Activated naive CD4-positive, alpha-beta T cell treated with anti-CD3 and anti-CD28 coated beads for 36 hours (primary cell): ENCODE measurements at regions of chr12 and their contacts with region 1.

Region 1: DNA sequence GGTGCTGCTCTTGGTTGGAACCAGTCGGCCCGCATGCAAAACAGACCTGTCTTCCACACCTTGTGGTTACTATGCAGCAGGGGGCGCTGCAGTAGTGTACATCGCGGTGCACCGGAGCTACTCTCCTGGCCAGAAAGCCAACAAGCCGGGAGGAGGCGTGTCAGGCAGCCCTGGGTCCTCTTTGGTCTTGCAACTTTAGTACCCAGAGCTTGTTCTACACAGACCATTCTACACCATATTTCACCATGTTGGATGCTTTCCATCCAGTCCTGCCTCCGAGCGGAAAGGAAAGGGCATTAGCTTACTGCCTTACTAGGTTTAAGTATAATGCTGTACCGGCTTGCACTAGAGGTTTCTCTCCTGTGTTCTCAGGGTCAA is 927 bp upstream of the TMTC2 start:
- DNase-seq: peak; percentile 97
- H3K4me3 Mint-ChIP-seq: peak overlapping the region; percentile 84
- H3K27ac Mint-ChIP-seq: peak overlapping the region; percentile 68
- H3K4me1 Mint-ChIP-seq: peaks cover 11% of the 10 kb centered on the region
- H3K27me3 Mint-ChIP-seq: peaks cover 6% of the 10 kb centered on the region

Region 2: GRCh38 chr12:81296556-81297305 is 1389.0 kb before region 1 on chr12:
- CTCF ChIA-PET with region 1: no interaction called
- intact Hi-C with region 1: no loop called
- DNase-seq: no peak
- H3K4me3 Mint-ChIP-seq: no peak overlapping the region
- H3K27ac Mint-ChIP-seq: no peak overlapping the region
- H3K4me1 Mint-ChIP-seq: no peaks in the 10 kb centered on the region
- H3K27me3 Mint-ChIP-seq: no peaks in the 10 kb centered on the region

Region 3: GRCh38 chr12:81859521-81859920 is 826.3 kb before region 1 on chr12:
- CTCF ChIA-PET with region 1: no interaction called
- intact Hi-C with region 1: no loop called
- DNase-seq: no peak
- H3K4me3 Mint-ChIP-seq: no peak overlapping the region
- H3K27ac Mint-ChIP-seq: no peak overlapping the region
- H3K4me1 Mint-ChIP-seq: peaks cover 2% of the 10 kb centered on the region
- H3K27me3 Mint-ChIP-seq: peaks cover 2% of the 10 kb centered on the region

Region 4: DNA sequence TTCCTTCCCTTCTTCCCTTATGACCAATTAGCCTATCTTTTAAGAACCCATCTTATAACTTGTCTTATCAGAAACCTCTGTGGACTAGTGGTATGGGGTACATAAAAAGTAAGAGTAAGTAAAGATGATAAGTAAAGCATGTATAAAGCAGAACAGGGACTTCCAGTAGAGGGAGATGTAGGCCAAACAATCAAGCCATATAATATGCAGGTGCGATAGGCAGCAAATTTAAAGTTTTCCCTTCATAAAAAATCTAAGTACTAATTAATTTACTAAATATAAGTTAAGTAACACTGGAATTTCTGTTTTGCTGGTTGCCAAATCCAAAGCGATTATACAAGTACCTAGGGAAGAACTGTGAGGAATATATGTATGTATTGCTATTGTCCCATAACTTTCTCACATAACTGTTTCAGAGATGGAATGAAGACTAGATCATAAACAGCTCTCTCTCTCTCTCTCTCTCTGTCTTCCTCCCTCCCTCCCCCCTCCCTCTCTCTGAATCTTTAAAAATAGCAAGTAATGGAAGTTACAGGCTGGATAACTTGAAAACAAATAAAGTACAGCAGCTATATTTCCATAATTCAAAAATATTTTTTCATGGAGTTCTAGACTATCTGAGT is 301.7 kb before region 1 on chr12:
- CTCF ChIA-PET with region 1: interaction called, 3 read pairs
- intact Hi-C with region 1: loop called (anchors 5 kb)
- DNase-seq: no peak
- H3K4me3 Mint-ChIP-seq: no peak overlapping the region
- H3K27ac Mint-ChIP-seq: no peak overlapping the region
- H3K4me1 Mint-ChIP-seq: no peaks in the 10 kb centered on the region
- H3K27me3 Mint-ChIP-seq: no peaks in the 10 kb centered on the region

Region 5: GRCh38 chr12:82672811-82673495 is 12.8 kb before region 1 on chr12:
- CTCF ChIA-PET with region 1: interaction called, 21 read pairs
- intact Hi-C with region 1: no loop called
- DNase-seq: no peak
- H3K4me3 Mint-ChIP-seq: no peak overlapping the region
- H3K27ac Mint-ChIP-seq: no peak overlapping the region
- H3K4me1 Mint-ChIP-seq: no peaks in the 10 kb centered on the region
- H3K27me3 Mint-ChIP-seq: peaks cover 13% of the 10 kb centered on the region

Region 6: DNA sequence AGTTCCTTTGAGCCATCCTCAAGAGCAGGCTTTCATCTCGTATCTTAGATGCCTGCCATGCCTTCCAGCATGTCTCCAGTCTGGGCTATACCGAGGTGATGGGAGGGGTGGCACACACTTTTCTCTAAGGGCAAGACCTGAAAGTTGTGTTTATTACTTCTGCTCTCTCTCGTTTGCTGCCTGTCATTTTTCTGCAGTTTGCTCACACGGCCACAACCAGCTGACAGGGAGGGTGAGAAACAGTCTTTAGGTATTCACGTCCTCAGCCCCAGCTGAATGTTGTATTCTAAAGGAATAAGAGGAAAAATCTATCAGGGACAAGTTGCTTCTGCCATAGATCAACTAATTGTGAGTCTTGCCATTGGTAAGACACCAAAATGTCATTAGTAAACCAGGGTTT is 88.9 kb after region 1 on chr12:
- CTCF ChIA-PET with region 1: no interaction called
- intact Hi-C with region 1: loop called (anchors 5 kb)
- DNase-seq: no peak
- H3K4me3 Mint-ChIP-seq: no peak overlapping the region
- H3K27ac Mint-ChIP-seq: no peak overlapping the region
- H3K4me1 Mint-ChIP-seq: no peaks in the 10 kb centered on the region
- H3K27me3 Mint-ChIP-seq: no peaks in the 10 kb centered on the region

Region 7: DNA sequence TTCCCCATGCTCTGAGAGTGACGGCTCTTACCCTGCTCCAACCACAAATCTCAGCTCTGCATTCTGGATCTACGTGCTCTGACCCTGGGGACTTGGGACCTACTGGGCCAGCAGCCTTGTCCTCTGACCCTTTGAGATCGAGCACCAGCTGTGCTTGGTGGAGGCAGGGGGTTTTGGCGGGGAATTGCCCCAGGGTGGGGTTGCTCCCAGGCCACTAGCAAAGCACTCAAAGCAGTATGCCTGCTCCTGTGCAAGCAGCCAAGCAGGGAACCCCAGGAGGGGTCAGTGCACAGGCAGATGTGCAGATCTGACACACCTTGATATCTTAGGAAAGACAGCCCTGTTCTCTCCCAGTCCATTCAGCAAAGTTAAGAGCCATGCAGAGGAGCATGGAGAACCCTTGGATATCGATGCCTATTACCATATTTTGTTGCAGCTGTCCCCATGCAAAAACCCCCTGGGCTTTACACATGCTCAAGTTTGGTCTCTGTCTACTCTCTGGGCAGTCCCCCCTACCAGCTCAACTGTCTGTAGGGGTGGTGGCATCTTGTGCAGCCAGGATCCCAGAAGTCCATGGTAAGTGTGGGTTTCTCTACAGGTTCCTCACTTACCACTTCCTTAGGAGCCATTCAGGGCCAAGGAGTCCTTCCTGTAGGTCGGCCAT is 319.9 kb after region 1 on chr12:
- CTCF ChIA-PET with region 1: interaction called, 3 read pairs
- intact Hi-C with region 1: loop called (anchors 2 kb)
- DNase-seq: no peak
- H3K4me3 Mint-ChIP-seq: no peak overlapping the region
- H3K27ac Mint-ChIP-seq: no peak overlapping the region
- H3K4me1 Mint-ChIP-seq: no peaks in the 10 kb centered on the region
- H3K27me3 Mint-ChIP-seq: no peaks in the 10 kb centered on the region

Region 8: DNA sequence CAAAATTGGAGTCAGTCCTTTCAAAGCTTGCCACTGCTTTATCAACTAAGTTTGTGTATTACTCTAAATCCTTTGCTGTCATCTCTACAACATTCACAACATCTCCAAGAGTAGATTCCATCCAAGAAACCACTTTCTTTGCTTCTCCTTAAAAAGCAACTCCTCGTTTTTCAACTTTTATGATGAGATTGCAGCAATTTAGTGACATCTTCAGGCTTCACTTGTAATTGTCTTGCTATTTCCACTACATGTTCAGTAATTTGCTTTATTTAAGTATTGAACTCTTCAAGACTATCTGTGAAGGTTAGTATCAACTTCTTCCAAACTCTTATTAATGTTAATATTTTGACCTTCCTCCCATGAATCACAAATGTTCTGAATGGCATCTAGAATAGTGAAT is 748.8 kb after region 1 on chr12:
- CTCF ChIA-PET with region 1: no interaction called
- intact Hi-C with region 1: loop called (anchors 5 kb)
- DNase-seq: no peak
- H3K4me3 Mint-ChIP-seq: no peak overlapping the region
- H3K27ac Mint-ChIP-seq: no peak overlapping the region
- H3K4me1 Mint-ChIP-seq: no peaks in the 10 kb centered on the region
- H3K27me3 Mint-ChIP-seq: no peaks in the 10 kb centered on the region

Region 9: GRCh38 chr12:84502907-84503787 is 1817.4 kb after region 1 on chr12:
- CTCF ChIA-PET with region 1: interaction called, 5 read pairs
- intact Hi-C with region 1: loop called (anchors 1 kb)
- DNase-seq: peak; percentile 52
- H3K4me3 Mint-ChIP-seq: no peak overlapping the region
- H3K27ac Mint-ChIP-seq: no peak overlapping the region
- H3K4me1 Mint-ChIP-seq: no peaks in the 10 kb centered on the region
- H3K27me3 Mint-ChIP-seq: no peaks in the 10 kb centered on the region